PC-9 (cell line): ENCODE measurements at regions of chr9 and their contacts with region 1.

Region 1: DNA sequence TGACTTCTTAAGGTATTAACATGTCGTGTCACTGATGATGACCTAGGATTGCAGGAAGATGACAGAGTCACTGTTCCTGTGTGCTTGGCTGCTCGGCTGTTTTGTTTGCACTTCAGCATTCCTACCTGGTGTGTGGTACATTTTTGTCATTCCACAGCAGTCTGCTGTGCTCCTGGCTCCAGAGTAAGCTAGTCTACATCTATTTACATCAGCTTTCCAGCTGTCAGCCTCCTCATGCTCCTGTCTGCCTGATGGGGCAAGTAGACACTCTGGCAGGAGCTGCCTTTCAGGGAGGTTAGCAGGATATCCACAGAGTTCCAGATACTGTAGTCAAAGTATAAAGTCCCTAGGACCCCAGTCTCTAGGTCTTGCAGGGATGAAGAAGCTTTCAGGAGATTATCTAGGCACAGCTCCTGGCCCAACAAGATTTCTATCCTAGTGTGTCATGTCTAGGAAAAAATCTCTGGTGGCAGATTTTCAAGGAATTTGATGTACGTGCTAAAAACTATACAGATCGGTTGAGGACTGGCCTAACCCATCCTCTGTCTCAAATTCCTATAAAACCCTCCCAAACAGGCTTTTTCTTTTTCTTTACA is 28.4 kb downstream of the RUSC2 start:
- DNase-seq: peak; percentile 73 to 96
- H3K4me3 ChIP-seq: no peak overlapping the region
- H3K27ac ChIP-seq: peak overlapping the region; percentile 89
- H3K4me1 ChIP-seq: peaks cover 76% of the 10 kb centered on the region
- H3K27me3 ChIP-seq: no peaks in the 10 kb centered on the region
- CTCF ChIP-seq: no peak

Region 2: DNA sequence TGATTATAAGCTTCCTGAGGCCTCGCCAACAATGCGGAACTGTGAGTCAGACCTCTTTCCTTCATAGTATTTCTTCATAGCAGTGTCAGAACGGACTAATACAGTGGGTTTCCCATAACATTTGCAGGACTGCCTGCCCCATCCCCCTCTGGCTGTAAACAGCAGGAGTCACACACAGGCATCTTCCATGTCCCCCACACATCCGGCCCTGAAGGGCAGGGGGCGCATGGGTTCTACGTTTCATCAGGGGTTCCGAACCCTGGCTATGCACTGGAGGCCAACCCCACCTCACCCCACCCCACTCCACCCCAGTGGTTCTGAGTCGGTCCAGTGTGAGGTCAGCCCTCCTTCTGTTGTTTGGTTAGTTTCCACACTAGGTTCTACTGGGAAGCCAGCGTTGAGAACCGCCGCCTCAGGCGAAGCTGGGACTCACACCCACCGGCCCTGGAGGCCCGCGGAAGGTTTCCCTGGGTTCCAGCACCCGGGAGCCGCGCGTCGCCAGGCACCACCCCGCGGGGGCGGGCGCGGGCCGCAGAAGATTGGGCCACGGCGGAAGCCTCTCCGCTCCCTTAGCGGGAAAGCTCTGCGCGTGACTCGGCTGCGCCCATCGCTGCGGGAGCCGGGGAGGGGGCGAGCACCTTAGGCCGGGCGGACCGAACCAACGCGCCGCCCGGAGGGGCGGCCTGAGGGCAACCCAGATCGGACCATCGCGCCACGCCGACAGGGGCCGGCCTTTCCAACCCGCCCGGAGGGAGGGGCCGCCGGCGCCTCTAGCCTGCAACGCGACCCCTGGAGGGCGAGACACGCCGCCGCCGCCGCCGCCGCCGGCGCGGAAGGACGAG is 28.8 kb before region 1 on chr9 and contains the start of gene RUSC2:
- CTCF ChIA-PET with region 1: interaction called, 3 read pairs
- POLR2A ChIA-PET with region 1: interaction called, 10 read pairs
- intact Hi-C with region 1: loop called (anchors 2 kb)
- DNase-seq: peak; percentile 64 to 82
- H3K4me3 ChIP-seq: peak within 1 kb of the TSS; percentile 76
- H3K27ac ChIP-seq: peak within 1 kb of the TSS; percentile 86
- H3K4me1 ChIP-seq: peaks cover 18% of the 10 kb centered on the region
- H3K27me3 ChIP-seq: no peaks in the 10 kb centered on the region
- CTCF ChIP-seq: peak; percentile 39; the same call in 1 of the 2 replicates
- total RNA-seq, gene RUSC2: 10.1 and 12.5 TPM in 2 replicates

Region 3: GRCh38 chr9:35548571-35548970 is 30.2 kb after region 1 on chr9:
- CTCF ChIA-PET with region 1: interaction called, 6 read pairs
- POLR2A ChIA-PET with region 1: interaction called, 10 read pairs
- intact Hi-C with region 1: no loop called
- DNase-seq: no peak
- H3K4me3 ChIP-seq: no peak overlapping the region
- H3K27ac ChIP-seq: no peak overlapping the region
- H3K4me1 ChIP-seq: no peaks in the 10 kb centered on the region
- H3K27me3 ChIP-seq: no peaks in the 10 kb centered on the region
- CTCF ChIP-seq: no peak

Region 4: DNA sequence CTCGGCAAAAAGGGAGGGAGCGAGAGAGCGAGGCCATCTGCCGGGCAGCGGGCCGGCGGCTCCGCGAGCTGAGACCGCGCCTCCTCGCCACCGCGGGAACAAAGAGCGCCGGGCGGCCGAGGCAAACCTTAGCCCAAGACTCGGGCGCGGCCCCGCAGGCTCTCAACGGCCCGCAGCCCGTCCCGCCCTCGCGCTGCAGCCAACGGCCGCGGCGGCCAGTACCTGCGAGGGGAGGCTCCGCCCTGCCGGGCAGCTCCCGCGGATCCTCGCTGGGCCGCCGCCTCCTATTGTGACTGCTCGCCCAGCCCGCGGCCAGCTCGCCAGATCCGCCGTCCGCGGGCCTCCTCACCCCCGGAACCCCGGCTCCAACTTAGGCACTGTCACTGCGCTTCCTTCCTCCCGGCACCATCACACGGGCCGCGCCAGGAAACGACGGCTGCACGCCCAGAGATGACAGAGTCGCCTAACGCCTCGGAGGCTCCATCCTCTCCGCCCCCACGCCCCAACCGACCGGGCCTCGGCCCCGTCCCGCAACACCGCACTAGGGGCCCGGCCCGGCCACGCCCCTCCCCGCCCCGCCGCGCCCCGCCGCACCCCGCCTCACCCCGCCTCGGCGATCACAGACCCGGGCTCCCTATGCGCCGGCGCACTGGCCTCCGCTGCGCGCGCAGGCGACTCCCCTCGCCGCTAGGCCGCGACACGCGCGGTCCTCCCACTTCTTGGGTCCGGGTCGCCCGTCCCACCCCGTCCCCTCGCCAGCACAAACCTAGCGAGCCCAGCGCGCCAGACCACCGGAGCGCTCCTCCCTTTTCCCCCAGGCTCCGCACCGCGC is 882.2 kb after region 1 on chr9:
- CTCF ChIA-PET with region 1: no interaction called
- POLR2A ChIA-PET with region 1: interaction called, 25 read pairs
- intact Hi-C with region 1: no loop called
- DNase-seq: peak; percentile 70 to 84
- H3K4me3 ChIP-seq: peak overlapping the region; percentile 73
- H3K27ac ChIP-seq: peak overlapping the region; percentile 84
- H3K4me1 ChIP-seq: peaks cover 29% of the 10 kb centered on the region
- H3K27me3 ChIP-seq: no peaks in the 10 kb centered on the region
- CTCF ChIP-seq: no peak